ENCODE measurements at regions of chr12 and their contacts with region 1.

Region 1: GRCh38 chr12:10721651-10722501 is 1.2 kb downstream of the YBX3 start:
- DNase-seq: peak; percentile 96
- ATAC-seq: peak; percentile 94
- H3K4me3 ChIP-seq: peak overlapping the region; percentile 96 to 100
- H3K27ac ChIP-seq: peak overlapping the region; percentile 98 to 99
- H3K4me1 ChIP-seq: peaks cover 2 to 6% of the 10 kb centered on the region in 2 donors
- H3K27me3 ChIP-seq: peaks cover 0 to 1% of the 10 kb centered on the region in 2 donors

Region 2: DNA sequence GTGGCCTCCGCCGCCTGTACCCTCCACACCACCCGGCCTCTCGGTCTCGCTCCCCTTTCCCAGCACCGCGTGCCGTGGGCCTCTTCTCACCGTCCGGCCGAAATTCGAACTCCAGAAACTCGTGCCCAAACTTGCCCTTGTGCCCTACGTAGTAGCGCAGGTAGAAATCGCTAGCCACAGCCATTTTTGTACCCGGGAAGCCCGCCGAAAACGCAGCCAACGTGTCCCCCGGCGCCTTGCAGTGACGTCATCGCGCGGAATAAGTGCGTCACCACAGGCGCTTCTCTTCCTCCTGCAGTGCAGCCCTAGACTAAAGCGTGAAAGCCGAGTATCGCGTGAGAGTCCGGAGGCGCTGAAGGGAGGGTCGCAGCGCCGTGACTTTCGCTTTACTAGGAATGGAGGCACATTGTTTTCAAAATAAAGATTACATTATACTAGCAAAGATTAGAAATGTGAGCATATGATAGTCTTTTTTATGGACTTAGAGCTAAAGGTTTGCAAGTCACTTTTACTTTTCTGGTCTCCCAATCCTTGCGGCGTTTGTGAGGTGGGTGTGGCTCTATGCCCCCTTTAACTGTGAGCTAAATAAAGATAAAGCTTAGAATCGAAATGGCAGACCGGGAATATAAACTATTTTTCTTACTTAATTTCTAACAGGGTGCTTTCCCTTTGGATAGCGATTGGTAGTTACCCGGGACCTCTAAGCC is 108.4 kb before region 1 on chr12 and contains the start of gene MAGOHB:
- intact Hi-C with region 1: loop called (anchors 10 kb)
- DNase-seq: peak; percentile 97 to 99
- ATAC-seq: peak; percentile 99
- H3K4me3 ChIP-seq: peak within 1 kb of the TSS; percentile 73 to 93
- H3K27ac ChIP-seq: peak within 1 kb of the TSS; percentile 9 to 24
- H3K4me1 ChIP-seq: peaks cover 0 to 3% of the 10 kb centered on the region in 2 donors
- H3K27me3 ChIP-seq: no peaks in the 10 kb centered on the region
- total RNA-seq, gene MAGOHB: 13.6 to 18.1 TPM

Region 3: DNA sequence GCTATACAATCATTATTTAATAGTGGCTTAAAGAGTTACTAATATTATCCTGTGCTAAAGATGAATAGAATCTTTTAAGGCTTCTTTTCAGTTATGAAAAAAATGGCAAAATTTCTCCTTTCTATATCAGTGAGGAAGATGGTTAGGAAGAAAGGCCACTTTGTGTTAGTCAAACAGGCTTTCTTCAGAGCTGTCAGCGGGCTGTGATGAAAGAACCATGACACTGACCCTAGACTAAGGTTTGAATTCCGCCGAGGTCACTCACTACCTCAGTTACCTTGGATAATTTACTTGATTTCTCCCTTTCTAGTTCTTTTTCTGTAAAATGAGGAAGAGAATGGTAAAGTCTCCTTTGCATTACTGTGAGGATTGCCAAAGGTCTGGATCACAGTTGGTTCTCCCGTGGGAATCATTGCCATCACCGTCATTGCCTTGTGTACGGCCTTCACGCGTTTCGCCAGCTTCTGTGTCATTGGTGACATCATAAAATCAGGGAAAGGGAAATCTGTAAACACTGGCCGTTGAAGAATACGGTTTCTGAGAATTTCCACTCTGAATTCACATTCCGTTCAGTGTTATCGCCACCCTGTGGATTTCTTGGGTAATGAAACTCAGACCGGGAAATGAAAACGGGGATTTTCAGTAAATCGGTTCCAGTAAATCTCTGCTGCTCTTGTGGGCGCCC is 28.0 kb after region 1 on chr12:
- intact Hi-C with region 1: loop called in 1 of 2 experiments (anchors 2 kb)
- DNase-seq: peak; percentile 71 to 81
- ATAC-seq: peak; percentile 98
- H3K4me3 ChIP-seq: peak overlapping the region in 1 of 2 donors; percentile 38
- H3K27ac ChIP-seq: no peak overlapping the region
- H3K4me1 ChIP-seq: peaks cover 0 to 1% of the 10 kb centered on the region in 2 donors
- H3K27me3 ChIP-seq: no peaks in the 10 kb centered on the region